ENCODE measurements at regions of chr16 and their contacts with region 1.

Region 1: GRCh38 chr16:56262148-56262547 is 70.9 kb downstream of the GNAO1 start:
- DNase-seq: peak; percentile 74 to 88 (median 84)
- H3K4me3 ChIP-seq: peak overlapping the region; percentile 2 to 45
- H3K4me3 Mint-ChIP-seq: peak overlapping the region; percentile 47 to 82 (median 65)
- H3K27ac ChIP-seq: peak overlapping the region; percentile 45
- H3K27ac Mint-ChIP-seq: peak overlapping the region; percentile 77 to 97 (median 89)
- H3K4me1 ChIP-seq: peaks cover 59% of the 10 kb centered on the region
- H3K4me1 Mint-ChIP-seq: peaks cover 36 to 75% (median 52%) of the 10 kb centered on the region in 4 donors
- H3K27me3 ChIP-seq: no peaks in the 10 kb centered on the region
- H3K27me3 Mint-ChIP-seq: no peaks in the 10 kb centered on the region

Region 2: GRCh38 chr16:56191156-56191815 is 70.9 kb before region 1 on chr16 and contains the start of gene GNAO1:
- CTCF ChIA-PET with region 1: no interaction called
- POLR2A ChIA-PET with region 1: interaction called, 23 read pairs
- intact Hi-C with region 1: no loop called
- DNase-seq: peak; percentile 62 to 79 (median 76)
- H3K4me3 ChIP-seq: peak within 1 kb of the TSS; percentile 6 to 56
- H3K4me3 Mint-ChIP-seq: peak within 1 kb of the TSS; percentile 84 to 90 (median 85)
- H3K27ac ChIP-seq: peak within 1 kb of the TSS; percentile 56
- H3K27ac Mint-ChIP-seq: peak within 1 kb of the TSS; percentile 68 to 87 (median 81)
- H3K4me1 ChIP-seq: peaks cover 42% of the 10 kb centered on the region
- H3K4me1 Mint-ChIP-seq: peaks cover 18 to 50% (median 33%) of the 10 kb centered on the region in 4 donors
- H3K27me3 ChIP-seq: no peaks in the 10 kb centered on the region
- H3K27me3 Mint-ChIP-seq: peaks cover 3 to 12% of the 10 kb centered on the region in 2 donors
- total RNA-seq, gene GNAO1: 10.5 to 10.8 TPM

Region 3: GRCh38 chr16:56226187-56226586 is 36.0 kb before region 1 on chr16:
- CTCF ChIA-PET with region 1: interaction called, 7 read pairs
- POLR2A ChIA-PET with region 1: interaction called, 26 read pairs
- intact Hi-C with region 1: loop called (anchors 5 kb)
- DNase-seq: no peak
- H3K4me3 ChIP-seq: no peak overlapping the region
- H3K4me3 Mint-ChIP-seq: peak overlapping the region in 7 of 8 donors; percentile 73 to 90 (median 84)
- H3K27ac ChIP-seq: no peak overlapping the region
- H3K27ac Mint-ChIP-seq: peak overlapping the region; percentile 73 to 94 (median 83)
- H3K4me1 ChIP-seq: peaks cover 38% of the 10 kb centered on the region
- H3K4me1 Mint-ChIP-seq: peaks cover 35 to 49% (median 41%) of the 10 kb centered on the region in 4 donors
- H3K27me3 ChIP-seq: no peaks in the 10 kb centered on the region
- H3K27me3 Mint-ChIP-seq: no peaks in the 10 kb centered on the region